ENCODE measurements at regions of chr17 and their contacts with region 1.

Region 1: DNA sequence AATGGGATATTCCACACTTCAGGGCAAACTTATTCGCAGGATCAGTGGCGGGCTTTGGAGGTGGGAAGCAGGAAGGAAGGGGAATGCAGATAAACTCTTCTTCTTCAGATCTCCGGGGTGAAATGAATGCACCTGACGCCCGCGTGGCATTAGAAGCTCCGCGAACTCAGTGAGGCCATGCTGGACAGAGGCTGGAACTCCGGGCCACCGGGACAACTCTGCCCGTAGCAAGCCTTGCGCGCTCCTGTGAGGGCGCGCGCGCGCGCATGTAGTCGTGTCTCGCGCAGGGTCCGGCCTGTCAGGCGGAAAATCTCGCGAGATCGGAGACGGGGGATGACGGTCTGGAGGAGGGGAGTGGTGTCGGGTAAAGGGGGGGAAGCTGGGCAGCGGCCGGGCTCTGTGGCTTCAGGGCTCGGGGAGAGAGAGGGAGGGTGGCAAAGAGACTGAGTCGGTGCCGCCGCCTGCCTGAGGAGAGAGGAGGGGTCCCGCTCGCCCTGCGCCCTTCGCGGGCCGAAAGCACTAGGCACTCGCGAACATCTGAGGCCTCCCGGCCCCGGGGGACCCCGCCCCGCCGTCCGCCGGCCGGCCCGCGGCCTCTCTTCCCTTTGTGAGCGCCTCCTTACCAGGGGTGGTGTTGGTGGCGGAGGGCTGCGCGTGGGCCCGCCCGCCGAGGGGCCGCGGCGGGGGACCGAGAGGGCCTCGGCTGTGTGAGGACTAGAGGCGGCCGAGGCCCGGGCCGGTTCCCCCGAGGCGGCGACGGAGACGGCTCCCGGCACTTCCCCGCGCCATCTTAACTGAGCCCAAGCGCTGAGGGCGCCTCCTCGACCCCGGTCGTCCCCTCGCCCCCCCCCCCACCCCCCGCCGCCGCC is at the start of gene TAOK1:
- DNase-seq: peak; percentile 99
- H3K4me3 Mint-ChIP-seq: peak within 1 kb of the TSS; percentile 95
- H3K27ac Mint-ChIP-seq: peak within 1 kb of the TSS; percentile 95
- H3K4me1 Mint-ChIP-seq: peaks cover 32% of the 10 kb centered on the region
- H3K27me3 Mint-ChIP-seq: no peaks in the 10 kb centered on the region
- total RNA-seq, gene TAOK1: 42.7 and 43.2 TPM in 2 replicates

Region 2: DNA sequence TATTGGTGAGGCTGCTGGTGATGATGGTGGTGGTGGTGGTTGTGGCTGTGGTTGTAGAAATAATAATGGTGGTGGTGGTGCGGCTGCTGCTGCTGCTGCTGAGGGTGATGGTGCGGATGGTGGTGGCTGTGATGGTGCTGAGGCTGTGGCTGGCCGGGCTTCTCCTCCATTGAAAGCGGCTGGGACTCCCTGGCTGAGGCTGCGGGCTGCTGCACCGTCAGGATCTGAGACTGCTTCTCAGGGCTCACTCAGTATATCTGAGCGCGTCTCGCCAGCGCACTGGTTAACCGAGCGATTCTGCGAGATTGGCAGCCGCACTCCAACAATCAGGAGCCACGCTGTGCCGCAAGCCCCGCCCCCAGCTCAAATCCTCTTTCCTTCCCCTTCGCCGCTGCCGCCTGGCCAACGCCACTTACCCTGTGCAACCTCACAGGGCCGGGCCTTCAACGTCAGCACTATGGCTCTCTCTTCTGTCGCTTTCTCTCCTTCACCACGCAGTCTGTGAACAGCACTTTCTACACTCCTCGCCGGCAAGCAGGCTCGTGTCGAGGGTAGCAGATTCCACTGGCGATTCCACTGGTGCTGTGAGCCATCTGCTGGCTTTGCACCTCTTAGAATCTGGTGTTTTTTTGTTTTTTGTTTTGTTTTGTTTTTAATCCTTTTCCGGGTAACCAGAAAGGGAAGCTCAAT is 96.2 kb before region 1 on chr17 and contains the start of gene NUFIP2:
- intact Hi-C with region 1: loop called (anchors 1 kb)
- DNase-seq: peak; percentile 99
- H3K4me3 Mint-ChIP-seq: peak within 1 kb of the TSS; percentile 99
- H3K27ac Mint-ChIP-seq: peak within 1 kb of the TSS; percentile 99
- H3K4me1 Mint-ChIP-seq: peaks cover 28% of the 10 kb centered on the region
- H3K27me3 Mint-ChIP-seq: no peaks in the 10 kb centered on the region
- total RNA-seq, gene NUFIP2: 83.2 and 89.7 TPM in 2 replicates

Region 3: DNA sequence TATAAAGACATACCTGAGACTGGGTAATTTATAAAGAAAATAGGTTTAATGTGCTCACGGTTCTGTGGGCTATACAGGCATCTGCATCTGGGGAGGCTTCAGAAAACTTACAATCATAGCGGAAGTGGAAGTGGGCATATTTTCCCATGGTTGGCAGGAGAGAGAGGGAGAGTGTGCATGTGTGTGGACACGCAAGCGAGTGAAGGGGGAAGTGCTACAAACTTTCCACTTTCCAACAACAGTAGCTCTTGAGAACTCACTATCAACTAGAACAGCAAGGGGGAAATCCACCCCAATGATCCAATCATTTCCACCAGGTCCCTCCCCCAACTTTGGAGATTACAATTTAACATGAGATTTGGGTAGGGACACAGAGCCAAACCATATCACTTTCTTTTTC is 11.0 kb after region 1 on chr17:
- intact Hi-C with region 1: no loop called
- DNase-seq: no peak
- H3K4me3 Mint-ChIP-seq: no peak overlapping the region
- H3K27ac Mint-ChIP-seq: no peak overlapping the region
- H3K4me1 Mint-ChIP-seq: peaks cover 10% of the 10 kb centered on the region
- H3K27me3 Mint-ChIP-seq: no peaks in the 10 kb centered on the region

Region 4: GRCh38 chr17:29589524-29590410 is 199.6 kb after region 1 on chr17 and contains the start of gene GIT1:
- intact Hi-C with region 1: loop called (anchors 1 kb)
- DNase-seq: peak; percentile 96
- H3K4me3 Mint-ChIP-seq: peak within 1 kb of the TSS; percentile 92
- H3K27ac Mint-ChIP-seq: peak within 1 kb of the TSS; percentile 95
- H3K4me1 Mint-ChIP-seq: peaks cover 52% of the 10 kb centered on the region
- H3K27me3 Mint-ChIP-seq: no peaks in the 10 kb centered on the region
- total RNA-seq, gene GIT1: 91.3 and 91.4 TPM in 2 replicates